ENCODE measurements at regions of chr1 and their contacts with region 1.

Region 1: GRCh38 chr1:40709100-40709801 is 17.7 kb downstream of the NFYC start:
- DNase-seq: peak; percentile 42 to 95 (median 74)

Region 2: GRCh38 chr1:40691538-40692428 is 17.5 kb before region 1 on chr1 and contains the start of gene NFYC:
- intact Hi-C with region 1: loop called (anchors 2 kb)
- DNase-seq: peak; percentile 91 to 99 (median 95)

Region 3: GRCh38 chr1:40774266-40774998 is 65.2 kb after region 1 on chr1:
- intact Hi-C with region 1: loop called (anchors 5 kb)
- DNase-seq: peak in 7 of 10 donors; percentile 44 to 93 (median 55)